Endothelial cell of umbilical vein (primary cell): ENCODE measurements at regions of chr5 and their contacts with region 1.

Region 1: DNA sequence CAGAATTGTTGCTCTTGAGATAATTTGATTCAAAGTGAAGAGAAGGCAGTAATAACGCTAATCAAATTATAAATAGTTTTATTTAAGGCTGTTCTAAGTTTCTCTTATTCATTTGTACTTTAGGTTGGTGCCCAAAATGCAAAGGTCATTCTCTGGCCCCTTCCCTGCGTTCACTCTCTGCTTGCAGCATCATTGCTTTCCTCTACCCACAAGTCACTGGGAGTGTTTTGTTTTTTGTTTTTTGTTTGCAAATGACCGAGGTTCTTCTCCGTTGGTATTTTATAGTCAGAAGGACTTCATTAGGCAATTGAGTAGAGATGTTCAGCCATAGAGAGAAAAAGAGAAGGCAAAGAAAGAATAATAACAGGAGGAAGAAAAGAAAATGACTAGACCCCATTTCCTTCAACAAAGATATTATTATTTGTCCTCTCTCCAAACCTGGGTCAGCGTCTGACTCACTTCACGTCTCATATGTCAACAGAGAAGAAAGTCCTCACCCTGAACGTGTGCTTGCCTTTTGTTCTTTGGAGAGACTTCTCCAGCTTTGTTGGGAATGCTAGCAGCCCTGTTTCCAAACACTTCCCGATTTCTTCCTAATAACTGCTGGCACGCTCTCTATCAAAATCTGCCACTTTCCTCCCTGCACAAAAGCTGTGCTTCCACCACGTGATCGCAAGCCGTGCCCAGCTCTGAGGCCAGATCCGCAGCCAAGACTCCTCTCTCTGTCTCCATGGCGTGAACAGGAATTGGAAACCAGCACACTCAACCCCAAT is 119.8 kb downstream of the EBF1 start:
- DNase-seq: peak; percentile 86
- H3K4me3 ChIP-seq: peak overlapping the region in 1 of 3 experiments; percentile 51
- H3K27ac ChIP-seq: peak overlapping the region; percentile 62
- H3K4me1 ChIP-seq: peaks cover 31% of the 10 kb centered on the region
- H3K27me3 ChIP-seq: no peaks in the 10 kb centered on the region
- CTCF ChIP-seq: no peak
- POLR2A ChIP-seq: no peak

Region 2: DNA sequence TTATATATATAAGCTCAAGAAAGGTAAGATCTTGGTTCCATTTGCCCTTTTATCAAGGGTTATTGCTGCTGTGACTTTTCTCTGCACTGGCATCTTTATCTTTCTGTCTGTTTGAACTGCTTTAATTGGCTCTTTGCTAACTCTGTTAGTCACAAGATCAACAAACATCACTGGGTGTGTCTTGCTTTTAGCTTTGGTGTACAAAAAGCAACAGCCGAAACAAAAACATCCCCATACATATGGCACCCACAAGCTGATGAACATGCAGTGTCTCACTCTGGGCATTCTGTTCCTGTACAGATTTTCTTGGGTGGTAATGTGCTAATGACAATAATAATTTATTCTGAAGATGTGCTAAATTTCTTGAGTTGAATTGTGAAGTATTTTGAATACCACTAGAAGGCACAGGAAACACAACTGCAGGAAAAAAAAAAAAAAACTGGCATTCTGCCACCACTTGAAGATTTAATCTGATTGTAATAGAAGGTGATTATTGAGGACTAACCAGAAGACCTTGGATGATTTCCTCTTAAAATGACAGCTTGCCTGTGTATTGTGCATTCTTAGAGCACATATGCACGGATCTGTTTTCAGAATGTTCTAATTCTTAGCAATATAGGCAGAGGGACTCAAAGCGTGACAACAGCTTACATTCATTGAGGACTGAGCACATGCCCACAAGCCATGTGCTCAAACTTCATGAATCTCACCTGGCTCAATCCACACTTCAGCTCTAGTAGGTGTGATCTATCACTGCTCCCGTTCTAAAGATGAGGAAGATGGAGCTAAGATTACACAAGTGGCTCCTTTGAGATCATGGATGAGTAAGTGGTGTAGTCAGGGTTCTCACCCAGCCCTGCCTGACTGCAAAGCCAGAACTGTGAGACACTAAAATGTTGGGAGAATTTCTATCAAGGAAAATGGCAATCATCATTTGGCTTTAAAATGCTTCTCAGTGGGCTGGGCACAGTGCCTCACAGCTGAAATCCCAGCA is 23.4 kb after region 1 on chr5:
- CTCF ChIA-PET with region 1: interaction called, 4 read pairs
- POLR2A ChIA-PET with region 1: no interaction called
- dilution Hi-C with region 1: no loop called
- intact Hi-C with region 1: loop called (anchors 1 kb)
- DNase-seq: peak; percentile 40
- H3K4me3 ChIP-seq: no peak overlapping the region
- H3K27ac ChIP-seq: no peak overlapping the region
- H3K4me1 ChIP-seq: peaks cover 14% of the 10 kb centered on the region
- H3K27me3 ChIP-seq: peaks cover 5 to 21% of the 10 kb centered on the region in 2 experiments
- CTCF ChIP-seq: no peak
- POLR2A ChIP-seq: no peak

Region 3: GRCh38 chr5:159010661-159011442 is 30.9 kb after region 1 on chr5:
- CTCF ChIA-PET with region 1: no interaction called
- POLR2A ChIA-PET with region 1: no interaction called
- dilution Hi-C with region 1: no loop called
- intact Hi-C with region 1: loop called (anchors 2 kb)
- DNase-seq: peak; percentile 22
- H3K4me3 ChIP-seq: peak overlapping the region in 1 of 3 experiments; percentile 5
- H3K27ac ChIP-seq: no peak overlapping the region
- H3K4me1 ChIP-seq: peaks cover 12% of the 10 kb centered on the region
- H3K27me3 ChIP-seq: peaks cover 2 to 6% of the 10 kb centered on the region in 2 experiments
- CTCF ChIP-seq: no peak
- POLR2A ChIP-seq: no peak